MCF 10A (cell line): ENCODE measurements at regions of chr12 and their contacts with region 1.

Region 1: GRCh38 chr12:54759751-54760150 is 94.6 kb upstream of the MUCL1 start:
- DNase-seq: peak; percentile 69
- H3K4me3 Mint-ChIP-seq: no peak overlapping the region
- H3K27ac Mint-ChIP-seq: no peak overlapping the region
- H3K4me1 Mint-ChIP-seq: no peaks in the 10 kb centered on the region
- H3K27me3 Mint-ChIP-seq: peaks cover 55% of the 10 kb centered on the region
- CTCF ChIP-seq: peak; percentile 60

Region 2: GRCh38 chr12:54616933-54617680 is 142.6 kb before region 1 on chr12:
- CTCF ChIA-PET with region 1: no interaction called
- POLR2A ChIA-PET with region 1: no interaction called
- intact Hi-C with region 1: no loop called
- DNase-seq: no peak
- H3K4me3 Mint-ChIP-seq: no peak overlapping the region
- H3K27ac Mint-ChIP-seq: no peak overlapping the region
- H3K4me1 Mint-ChIP-seq: peaks cover 5% of the 10 kb centered on the region
- H3K27me3 Mint-ChIP-seq: peaks cover 85% of the 10 kb centered on the region
- CTCF ChIP-seq: no peak

Region 3: GRCh38 chr12:54658306-54659264 is 101.2 kb before region 1 on chr12:
- CTCF ChIA-PET with region 1: no interaction called
- POLR2A ChIA-PET with region 1: no interaction called
- intact Hi-C with region 1: no loop called
- DNase-seq: peak; percentile 57
- H3K4me3 Mint-ChIP-seq: no peak overlapping the region
- H3K27ac Mint-ChIP-seq: no peak overlapping the region
- H3K4me1 Mint-ChIP-seq: no peaks in the 10 kb centered on the region
- H3K27me3 Mint-ChIP-seq: peaks cover 58% of the 10 kb centered on the region
- CTCF ChIP-seq: peak; percentile 31

Region 4: DNA sequence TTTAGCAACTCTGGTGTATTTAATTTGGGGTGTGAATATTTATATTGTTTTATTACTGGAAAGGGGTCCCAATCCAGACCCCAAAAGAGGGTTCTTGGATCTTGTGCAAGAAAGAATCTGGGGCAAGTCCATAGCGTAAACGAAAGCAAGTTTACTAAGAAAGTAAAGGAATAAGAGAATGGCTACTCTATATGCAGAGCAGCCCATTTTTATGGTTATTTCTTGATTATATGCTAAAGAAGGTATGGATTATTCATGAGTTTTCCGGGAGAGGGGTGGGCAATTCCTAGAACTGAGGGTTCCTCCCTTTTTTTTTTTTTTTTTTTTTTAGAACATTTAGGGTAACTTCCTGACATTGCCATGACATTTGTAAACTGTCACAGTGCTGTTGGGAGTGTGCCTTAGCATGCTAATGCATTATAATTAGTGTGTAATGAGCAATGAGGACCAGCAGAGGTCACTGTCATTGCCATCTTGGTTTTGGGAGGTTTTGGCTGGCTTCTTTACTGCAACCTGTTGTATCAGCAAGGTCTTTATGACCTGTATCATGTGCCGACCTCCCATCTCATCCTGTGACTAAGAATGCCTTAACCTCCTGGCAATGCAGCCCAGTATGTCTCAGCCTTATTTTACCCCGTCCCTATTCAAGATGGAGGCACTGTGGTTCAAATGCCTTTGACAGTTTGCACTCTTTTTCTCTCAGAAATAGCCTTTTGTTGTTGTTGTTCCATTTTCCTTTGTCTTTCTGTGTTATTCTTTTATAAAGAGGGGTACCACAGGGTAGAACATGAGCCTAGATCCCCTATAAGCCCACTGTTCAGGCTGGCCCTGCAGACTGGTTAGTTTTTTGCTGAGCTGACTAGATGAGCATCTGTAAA is 36.1 kb before region 1 on chr12:
- CTCF ChIA-PET with region 1: no interaction called
- POLR2A ChIA-PET with region 1: no interaction called
- intact Hi-C with region 1: no loop called
- DNase-seq: peak; percentile 60
- H3K4me3 Mint-ChIP-seq: no peak overlapping the region
- H3K27ac Mint-ChIP-seq: no peak overlapping the region
- H3K4me1 Mint-ChIP-seq: no peaks in the 10 kb centered on the region
- H3K27me3 Mint-ChIP-seq: peaks cover 79% of the 10 kb centered on the region
- CTCF ChIP-seq: peak; percentile 45

Region 5: GRCh38 chr12:55019779-55020178 is 260.0 kb after region 1 on chr12 and contains the start of gene NEUROD4:
- CTCF ChIA-PET with region 1: no interaction called
- POLR2A ChIA-PET with region 1: no interaction called
- intact Hi-C with region 1: no loop called
- DNase-seq: peak; percentile 54
- H3K4me3 Mint-ChIP-seq: no peak within 1 kb of the TSS
- H3K27ac Mint-ChIP-seq: no peak within 1 kb of the TSS
- H3K4me1 Mint-ChIP-seq: no peaks in the 10 kb centered on the region
- H3K27me3 Mint-ChIP-seq: peaks cover 64% of the 10 kb centered on the region
- CTCF ChIP-seq: no peak
- total RNA-seq, gene NEUROD4: not detected in 2 replicates

Region 6: DNA sequence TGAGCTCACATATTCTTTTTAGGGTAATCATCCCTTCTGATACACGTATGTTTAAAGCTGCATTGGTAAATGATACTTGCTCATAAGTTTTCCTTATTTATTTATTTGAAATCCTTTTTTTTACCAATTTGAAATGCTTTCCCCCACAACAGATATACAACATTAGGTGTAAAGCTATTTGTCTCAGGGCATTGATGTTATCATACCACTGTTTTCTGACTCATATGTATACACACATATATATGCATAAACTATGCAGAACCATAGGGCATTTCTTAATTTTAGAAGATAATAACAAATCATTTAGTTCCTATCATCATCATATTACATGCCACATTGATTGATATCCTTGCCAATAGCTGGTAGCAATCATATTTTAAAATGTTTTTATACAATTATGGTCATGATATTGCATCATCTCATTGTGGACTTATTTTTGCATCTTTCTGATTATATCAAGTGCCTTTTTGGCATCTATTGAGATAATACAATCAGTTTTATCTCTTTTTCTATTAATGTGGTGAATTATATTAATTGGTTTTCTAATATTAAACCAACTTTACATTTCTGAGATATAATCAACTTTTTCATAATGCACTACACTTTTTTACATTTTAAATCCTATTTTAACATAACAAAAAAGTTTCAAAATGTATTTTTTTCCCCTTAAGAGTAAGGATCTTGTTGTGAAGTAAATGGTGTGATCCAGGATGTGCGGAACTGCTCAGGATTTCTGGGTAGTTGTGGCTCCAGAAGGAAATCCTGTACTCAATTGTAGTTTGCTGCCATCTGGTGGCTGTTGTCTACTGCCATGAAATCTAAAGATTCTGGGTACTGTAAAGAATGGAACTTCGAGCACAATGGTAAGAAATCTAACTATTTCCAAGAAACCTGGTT is 383.2 kb after region 1 on chr12:
- CTCF ChIA-PET with region 1: no interaction called
- POLR2A ChIA-PET with region 1: no interaction called
- intact Hi-C with region 1: loop called (anchors 5 kb)
- DNase-seq: peak; percentile 67
- H3K4me3 Mint-ChIP-seq: no peak overlapping the region
- H3K27ac Mint-ChIP-seq: no peak overlapping the region
- H3K4me1 Mint-ChIP-seq: no peaks in the 10 kb centered on the region
- H3K27me3 Mint-ChIP-seq: peaks cover 59% of the 10 kb centered on the region
- CTCF ChIP-seq: peak; percentile 57